ENCODE measurements at regions of chr19 and their contacts with region 1.

Region 1: GRCh38 chr19:38315657-38316476 is at the start of gene YIF1B:
- DNase-seq: peak; percentile 96 to 99 (median 98)
- ATAC-seq: peak; percentile 95 to 97 (median 96)
- H3K4me3 ChIP-seq: peak within 1 kb of the TSS; percentile 36 to 80 (median 68)
- H3K27ac ChIP-seq: peak within 1 kb of the TSS; percentile 49 to 94 (median 87)
- H3K4me1 ChIP-seq: peaks cover 0 to 69% (median 34%) of the 10 kb centered on the region in 12 donors
- H3K27me3 ChIP-seq: no peaks in the 10 kb centered on the region
- CTCF ChIP-seq: peak in 1 of 12 donors; percentile 17
- POLR2A ChIP-seq: peak in 1 of 2 donors; percentile 24
- total RNA-seq, gene YIF1B: 26.4 to 47.4 (median 31.9) TPM

Region 2: DNA sequence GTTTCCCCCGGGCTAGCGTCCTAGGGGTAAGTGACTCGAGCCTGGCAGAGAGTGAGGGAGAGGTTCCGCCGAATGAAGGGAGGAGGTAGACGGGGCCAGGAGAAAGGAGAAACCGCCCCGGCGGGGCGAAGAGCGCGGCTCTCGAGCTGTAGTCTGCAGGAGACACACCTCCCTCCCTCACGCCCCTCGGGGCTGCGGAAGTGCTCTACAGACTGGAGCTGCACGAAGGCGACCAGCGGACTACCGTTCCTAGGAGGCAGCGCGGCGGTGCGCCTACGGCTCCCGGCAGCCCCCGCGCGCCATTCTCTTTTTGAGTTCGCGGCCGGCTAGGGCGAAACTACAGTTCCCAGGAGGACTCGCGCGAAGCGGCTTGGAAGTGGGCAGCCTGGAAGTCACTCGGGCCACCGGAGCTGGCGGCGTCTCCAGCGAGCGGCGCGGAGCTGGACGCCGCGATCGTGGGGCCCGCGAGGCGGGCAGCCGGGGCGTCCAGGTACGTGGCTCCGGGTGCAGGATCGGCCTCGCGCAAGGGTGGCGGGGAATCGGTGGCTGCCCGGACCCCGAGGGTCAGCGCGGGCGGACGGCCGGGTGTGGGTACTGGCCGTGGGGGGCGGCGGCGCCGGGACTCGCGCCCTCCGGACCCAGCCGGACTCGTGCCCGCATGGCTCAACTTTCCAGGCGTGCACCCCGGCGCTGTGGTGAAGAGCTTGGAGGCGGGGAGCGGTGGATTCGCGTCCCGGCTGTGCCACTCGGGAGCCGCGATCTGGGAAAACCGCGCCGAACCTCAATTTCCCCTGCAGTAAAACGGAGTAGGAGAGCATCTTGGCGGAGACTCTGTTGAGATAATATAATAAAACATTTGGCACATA is 408.8 kb before region 1 on chr19 and contains the start of gene SIPA1L3:
- intact Hi-C with region 1: loop called in 1 of 10 experiments (anchors 5 kb)
- DNase-seq: peak; percentile 94 to 97 (median 95)
- ATAC-seq: peak; percentile 97 to 99 (median 99)
- H3K4me3 ChIP-seq: peak within 1 kb of the TSS; percentile 76 to 98 (median 88)
- H3K27ac ChIP-seq: peak within 1 kb of the TSS in 11 of 12 donors; percentile 47 to 81 (median 76)
- H3K4me1 ChIP-seq: peaks cover 0 to 19% (median 12%) of the 10 kb centered on the region in 12 donors
- H3K27me3 ChIP-seq: no peaks in the 10 kb centered on the region
- CTCF ChIP-seq: peak in 2 of 12 donors; percentile 18 to 25
- POLR2A ChIP-seq: peak in 1 of 2 donors; percentile 86
- total RNA-seq, gene SIPA1L3: 6.3 to 22.9 (median 9.4) TPM

Region 3: GRCh38 chr19:38245826-38246498 is 69.9 kb before region 1 on chr19:
- intact Hi-C with region 1: loop called in 2 of 10 experiments (anchors 2 to 5 kb)
- DNase-seq: peak in 1 of 5 donors; percentile 49
- ATAC-seq: peak in 1 of 4 donors; percentile 16
- H3K4me3 ChIP-seq: no peak overlapping the region
- H3K27ac ChIP-seq: peak overlapping the region in 6 of 12 donors; percentile 11 to 76 (median 40)
- H3K4me1 ChIP-seq: peaks cover 0 to 46% (median 16%) of the 10 kb centered on the region in 12 donors
- H3K27me3 ChIP-seq: no peaks in the 10 kb centered on the region
- CTCF ChIP-seq: no peak
- POLR2A ChIP-seq: no peak

Region 4: GRCh38 chr19:38277969-38278680 is 37.7 kb before region 1 on chr19:
- intact Hi-C with region 1: loop called in 9 of 10 experiments (anchors 1 to 5 kb)
- DNase-seq: peak in 4 of 5 donors; percentile 79 to 86 (median 84)
- ATAC-seq: peak; percentile 80 to 93 (median 90)
- H3K4me3 ChIP-seq: no peak overlapping the region
- H3K27ac ChIP-seq: peak overlapping the region; percentile 57 to 90 (median 78)
- H3K4me1 ChIP-seq: peaks cover 4 to 78% (median 47%) of the 10 kb centered on the region in 12 donors
- H3K27me3 ChIP-seq: no peaks in the 10 kb centered on the region
- CTCF ChIP-seq: no peak
- POLR2A ChIP-seq: peak in 1 of 2 donors; percentile 21

Region 5: GRCh38 chr19:38374429-38375176 is 58.7 kb after region 1 on chr19 and contains the start of gene PSMD8:
- intact Hi-C with region 1: loop called in 1 of 10 experiments (anchors 2 kb)
- DNase-seq: peak; percentile 99 to 100 (median 99)
- ATAC-seq: peak; percentile 96 to 98 (median 98)
- H3K4me3 ChIP-seq: peak within 1 kb of the TSS; percentile 70 to 94 (median 88)
- H3K27ac ChIP-seq: peak within 1 kb of the TSS; percentile 78 to 97 (median 91)
- H3K4me1 ChIP-seq: peaks cover 7 to 29% (median 22%) of the 10 kb centered on the region in 12 donors
- H3K27me3 ChIP-seq: no peaks in the 10 kb centered on the region
- CTCF ChIP-seq: peak in 8 of 12 donors; percentile 15 to 61 (median 35)
- POLR2A ChIP-seq: peak; percentile 15 to 96
- total RNA-seq, gene PSMD8: 237 to 690 (median 325) TPM